H1 (cell line): ENCODE measurements at regions of chr19 and their contacts with region 1.

Region 1: GRCh38 chr19:17327651-17328516 is 6.8 kb downstream of the ANO8 start:
- DNase-seq: peak in 1 of 2 experiments; percentile 89
- H3K4me3 ChIP-seq: peak overlapping the region; percentile 60 to 95 (median 61)
- H3K27ac ChIP-seq: peak overlapping the region; percentile 66
- H3K4me1 ChIP-seq: peaks cover 0 to 22% (median 15%) of the 10 kb centered on the region in 4 experiments; a peak in 6 of 7 replicates
- H3K27me3 ChIP-seq: no peaks in the 10 kb centered on the region; a peak in 1 of 7 replicates
- CTCF ChIP-seq: peak; percentile 75 to 87 (median 85)
- EP300 ChIP-seq: no peak
- POLR2A ChIP-seq: peak in 1 of 2 experiments; percentile 82; a peak in 2 of 3 replicates
- RAD21 ChIP-seq: peak; percentile 50 to 62; a peak in 3 of 4 replicates

Region 2: DNA sequence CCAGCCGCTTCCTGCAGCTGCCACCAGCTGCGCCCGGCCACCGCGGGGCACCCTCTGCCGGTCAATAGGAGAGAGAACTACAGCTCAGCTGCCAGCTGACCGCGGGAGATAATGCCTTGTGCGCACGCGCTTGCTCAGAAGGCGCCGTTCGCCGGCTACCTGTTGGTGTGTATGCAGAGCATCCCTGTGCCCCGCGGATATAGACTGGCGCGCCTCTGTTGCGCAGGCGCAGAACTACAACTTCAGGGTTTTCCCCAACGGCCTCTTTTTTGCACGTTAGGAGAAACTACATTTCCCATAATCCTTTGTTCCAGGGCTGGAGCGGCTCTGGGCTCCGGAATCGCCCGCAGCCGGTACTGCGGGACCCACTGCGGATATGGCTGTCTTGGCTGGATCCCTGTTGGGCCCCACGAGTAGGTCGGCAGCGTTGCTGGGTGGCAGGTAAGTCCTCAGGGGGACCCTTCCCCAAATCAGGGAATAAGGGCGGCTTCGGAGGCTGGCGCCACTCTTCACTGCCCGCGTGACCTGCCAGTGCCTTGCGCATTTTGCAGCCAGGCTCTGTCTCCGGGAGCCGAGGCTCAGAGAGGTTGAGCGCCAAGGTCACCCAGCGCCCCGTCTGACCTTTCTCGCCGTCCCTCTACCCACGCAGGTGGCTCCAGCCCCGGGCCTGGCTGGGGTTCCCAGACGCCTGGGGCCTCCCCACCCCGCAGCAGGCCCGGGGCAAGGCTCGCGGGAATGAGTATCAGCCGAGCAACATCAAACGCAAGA is 22.2 kb before region 1 on chr19 and contains the start of gene MRPL34:
- CTCF ChIA-PET with region 1: interaction called, 13 read pairs
- POLR2A ChIA-PET with region 1: interaction called, 329 read pairs
- DNase-seq: peak; percentile 96 to 100
- H3K4me3 ChIP-seq: peak within 1 kb of the TSS; percentile 75 to 95 (median 80)
- H3K27ac ChIP-seq: peak within 1 kb of the TSS; percentile 81
- H3K4me1 ChIP-seq: peaks cover 14 to 28% (median 19%) of the 10 kb centered on the region in 4 experiments
- H3K27me3 ChIP-seq: no peaks in the 10 kb centered on the region
- CTCF ChIP-seq: peak; percentile 67 to 88 (median 81)
- EP300 ChIP-seq: peak; percentile 23 to 61; a peak in 1 of 3 replicates
- POLR2A ChIP-seq: peak; percentile 19 to 66
- RAD21 ChIP-seq: peak; percentile 47 to 63
- total RNA-seq, gene MRPL34: 99.6 and 100 TPM in 2 replicates